ENCODE measurements at regions of chr3 and their contacts with region 1.

Region 1: DNA sequence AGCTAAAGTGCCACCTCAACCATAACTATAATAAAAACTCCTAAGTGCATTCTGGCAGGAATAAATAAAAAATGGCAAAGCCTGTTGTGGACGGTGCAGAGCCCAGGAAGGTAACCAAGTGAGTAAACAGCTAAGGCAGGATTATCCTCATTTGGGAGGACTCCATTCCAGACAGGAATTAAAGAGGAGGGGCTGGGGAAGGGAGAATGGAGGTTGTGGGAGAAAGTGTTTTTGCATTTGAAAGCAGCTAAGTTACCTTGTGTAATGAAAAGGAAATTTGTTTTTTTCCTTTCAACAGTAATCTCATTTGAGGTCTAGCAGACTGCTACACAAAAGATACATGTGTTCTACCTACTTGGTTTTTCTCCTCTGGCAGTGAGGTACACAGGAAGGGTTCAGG is 248.5 kb downstream of the TIGIT start:
- DNase-seq: no peak
- ATAC-seq: no peak
- H3K4me3 ChIP-seq: no peak overlapping the region
- H3K4me3 Mint-ChIP-seq: no peak overlapping the region
- H3K27ac ChIP-seq: no peak overlapping the region
- H3K27ac Mint-ChIP-seq: no peak overlapping the region
- H3K4me1 ChIP-seq: no peaks in the 10 kb centered on the region
- H3K4me1 Mint-ChIP-seq: no peaks in the 10 kb centered on the region
- H3K27me3 ChIP-seq: no peaks in the 10 kb centered on the region
- H3K27me3 Mint-ChIP-seq: no peaks in the 10 kb centered on the region
- CTCF ChIP-seq: no peak

Region 2: GRCh38 chr3:114697401-114697800 is 155.0 kb after region 1 on chr3:
- CTCF ChIA-PET with region 1: no interaction called
- POLR2A ChIA-PET with region 1: no interaction called
- intact Hi-C with region 1: loop called in 1 of 2 experiments (anchors 10 kb)
- DNase-seq: peak in 1 of 14 experiments; percentile 2
- ATAC-seq: no peak
- H3K4me3 ChIP-seq: no peak overlapping the region
- H3K4me3 Mint-ChIP-seq: no peak overlapping the region
- H3K27ac ChIP-seq: no peak overlapping the region
- H3K27ac Mint-ChIP-seq: no peak overlapping the region
- H3K4me1 ChIP-seq: no peaks in the 10 kb centered on the region
- H3K4me1 Mint-ChIP-seq: peaks cover 9% of the 10 kb centered on the region
- H3K27me3 ChIP-seq: no peaks in the 10 kb centered on the region
- H3K27me3 Mint-ChIP-seq: no peaks in the 10 kb centered on the region
- CTCF ChIP-seq: no peak

Region 3: DNA sequence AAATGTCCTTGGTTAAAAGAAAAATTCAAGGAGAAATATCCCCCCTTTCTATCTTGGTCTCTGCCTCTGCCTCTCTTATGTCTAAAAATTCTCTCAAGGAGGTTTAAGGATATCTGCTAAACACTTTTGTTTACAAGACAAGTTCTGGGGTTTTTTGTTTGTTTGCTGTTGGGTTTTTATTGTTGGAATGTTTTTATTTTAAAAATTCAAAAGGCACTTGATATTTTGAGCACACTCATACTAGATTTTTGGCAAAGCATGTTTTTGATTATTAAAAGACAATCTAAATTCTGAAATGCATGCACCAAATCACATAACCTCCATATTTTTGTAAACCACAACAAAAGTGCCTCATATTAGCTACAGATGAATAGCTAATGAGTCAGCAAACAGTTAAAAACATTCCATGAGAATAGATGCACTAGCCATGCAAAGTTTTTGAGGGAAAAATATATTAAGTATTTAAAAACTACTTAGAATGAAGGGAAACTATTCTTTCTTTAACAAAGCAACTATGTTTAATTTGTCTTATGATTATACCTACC is 520.1 kb after region 1 on chr3:
- CTCF ChIA-PET with region 1: no interaction called
- POLR2A ChIA-PET with region 1: no interaction called
- intact Hi-C with region 1: no loop called
- DNase-seq: no peak
- ATAC-seq: no peak
- H3K4me3 ChIP-seq: no peak overlapping the region
- H3K4me3 Mint-ChIP-seq: no peak overlapping the region
- H3K27ac ChIP-seq: no peak overlapping the region
- H3K27ac Mint-ChIP-seq: no peak overlapping the region
- H3K4me1 ChIP-seq: no peaks in the 10 kb centered on the region
- H3K4me1 Mint-ChIP-seq: peaks cover 8% of the 10 kb centered on the region
- H3K27me3 ChIP-seq: no peaks in the 10 kb centered on the region
- H3K27me3 Mint-ChIP-seq: no peaks in the 10 kb centered on the region
- CTCF ChIP-seq: no peak